HepG2 (cell line): ENCODE measurements at regions of chr4 and their contacts with region 1.

Region 1: DNA sequence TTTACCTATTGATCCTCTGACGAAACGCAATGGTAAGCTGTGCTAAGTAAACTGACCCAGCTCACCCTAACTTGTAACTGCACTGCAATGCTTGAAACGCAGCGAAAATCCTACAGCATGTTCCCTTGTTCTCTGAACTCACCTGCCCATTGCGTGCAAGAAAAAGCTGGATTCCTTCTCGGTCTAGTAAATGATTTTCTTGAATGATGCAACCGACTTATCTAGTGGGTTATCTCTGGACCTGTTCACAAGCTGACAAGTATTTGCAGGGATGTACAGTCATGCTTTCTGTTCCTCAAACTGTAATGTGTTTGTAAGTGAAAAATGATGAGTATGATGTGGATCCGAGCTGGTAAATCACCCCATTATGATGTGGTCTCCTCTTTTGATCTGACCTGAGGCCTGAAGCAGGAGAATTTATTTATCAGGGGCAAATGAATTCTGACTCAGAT is 140.1 kb downstream of the BTC start:
- DNase-seq: peak; percentile 97
- ATAC-seq: peak; percentile 97
- H3K4me3 ChIP-seq: peak overlapping the region in 1 of 3 experiments; percentile 38; a peak in 2 of 6 replicates
- H3K27ac ChIP-seq: peak overlapping the region; percentile 87
- H3K4me1 ChIP-seq: peaks cover 71% of the 10 kb centered on the region
- H3K27me3 ChIP-seq: no peaks in the 10 kb centered on the region
- CTCF ChIP-seq: 0 out of 2 replicates have a peak, but pooled peaks have one; percentile 4
- EP300 ChIP-seq: peak; percentile 98
- POLR2A ChIP-seq: peak; percentile 42 to 75; a peak in 3 of 4 replicates
- RAD21 ChIP-seq: 0 out of 2 replicates have a peak, but pooled peaks have one; percentile 11

Region 2: GRCh38 chr4:74632634-74633033 is 21.6 kb before region 1 on chr4:
- CTCF ChIA-PET with region 1: no interaction called
- POLR2A ChIA-PET with region 1: interaction called, 10 read pairs
- in situ Hi-C with region 1: no loop called
- intact Hi-C with region 1: no loop called
- DNase-seq: no peak
- ATAC-seq: no peak
- H3K4me3 ChIP-seq: no peak overlapping the region
- H3K27ac ChIP-seq: no peak overlapping the region
- H3K4me1 ChIP-seq: peaks cover 19% of the 10 kb centered on the region
- H3K27me3 ChIP-seq: no peaks in the 10 kb centered on the region
- CTCF ChIP-seq: no peak
- EP300 ChIP-seq: no peak
- POLR2A ChIP-seq: no peak
- RAD21 ChIP-seq: no peak